K562 (cell line): ENCODE measurements at regions of chr2 and their contacts with region 1.

Region 1: DNA sequence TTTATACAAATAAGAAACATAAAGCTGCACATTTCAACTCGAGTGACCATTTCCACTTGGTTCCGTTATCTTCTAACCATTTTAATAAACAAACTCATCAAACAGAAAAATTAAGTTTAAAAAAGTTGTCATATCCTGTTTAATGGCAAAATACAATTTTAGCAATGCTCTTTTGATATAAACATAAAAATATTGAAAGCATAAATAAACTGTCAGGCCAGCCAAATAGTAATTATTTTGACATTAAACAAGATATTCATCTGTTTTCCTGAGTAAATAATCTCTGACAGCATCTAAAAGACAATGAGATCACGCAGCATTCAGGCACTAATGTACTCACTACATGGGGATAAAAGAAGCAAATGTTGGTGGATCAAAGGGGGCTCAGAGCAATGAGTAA is 145.3 kb upstream of the ATP5MC3 start:
- DNase-seq: no peak
- ATAC-seq: no peak
- H3K4me3 ChIP-seq: no peak overlapping the region
- H3K27ac ChIP-seq: no peak overlapping the region
- H3K4me1 ChIP-seq: no peaks in the 10 kb centered on the region
- H3K27me3 ChIP-seq: no peaks in the 10 kb centered on the region
- CTCF ChIP-seq: no peak
- EP300 ChIP-seq: no peak
- POLR2A ChIP-seq: no peak
- RAD21 ChIP-seq: no peak

Region 2: DNA sequence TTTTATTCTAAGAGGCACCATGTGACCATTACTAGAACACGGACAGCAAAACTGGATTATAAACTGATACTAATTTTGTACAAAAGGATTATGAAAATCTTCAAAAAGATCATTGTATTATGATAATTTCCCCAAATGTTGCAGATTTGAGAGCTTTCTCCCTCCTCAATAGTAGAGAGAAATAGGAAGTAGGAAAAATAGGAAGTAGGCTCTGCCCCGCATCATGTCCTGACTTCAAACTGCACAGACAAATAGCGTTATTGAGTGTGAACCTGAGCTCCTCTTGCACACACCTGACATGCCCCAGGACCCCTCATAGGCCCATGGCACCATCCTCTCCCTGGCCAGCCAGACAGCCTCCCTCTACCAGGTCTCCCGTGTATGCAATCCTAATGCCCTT is 588.0 kb before region 1 on chr2:
- CTCF ChIA-PET with region 1: no interaction called
- POLR2A ChIA-PET with region 1: no interaction called
- in situ Hi-C with region 1: no loop called
- intact Hi-C with region 1: no loop called
- DNase-seq: no peak
- ATAC-seq: no peak
- H3K4me3 ChIP-seq: no peak overlapping the region
- H3K27ac ChIP-seq: no peak overlapping the region
- H3K4me1 ChIP-seq: no peaks in the 10 kb centered on the region
- H3K27me3 ChIP-seq: peaks cover 13 to 20% of the 10 kb centered on the region in 2 experiments; a peak in 4 of 5 replicates
- CTCF ChIP-seq: no peak
- EP300 ChIP-seq: no peak
- POLR2A ChIP-seq: no peak
- RAD21 ChIP-seq: no peak

Region 3: GRCh38 chr2:175030380-175031271 is 296.2 kb before region 1 on chr2:
- CTCF ChIA-PET with region 1: no interaction called
- POLR2A ChIA-PET with region 1: no interaction called
- in situ Hi-C with region 1: no loop called
- intact Hi-C with region 1: loop called (anchors 1 kb)
- DNase-seq: peak in 2 of 4 experiments; percentile 36 to 55
- ATAC-seq: peak; percentile 98
- H3K4me3 ChIP-seq: no peak overlapping the region
- H3K27ac ChIP-seq: no peak overlapping the region
- H3K4me1 ChIP-seq: no peaks in the 10 kb centered on the region
- H3K27me3 ChIP-seq: peaks cover 0 to 6% of the 10 kb centered on the region in 2 experiments; a peak in 3 of 5 replicates
- CTCF ChIP-seq: peak; percentile 60 to 73 (median 68)
- EP300 ChIP-seq: no peak
- POLR2A ChIP-seq: no peak
- RAD21 ChIP-seq: peak; percentile 55 to 82

Region 4: DNA sequence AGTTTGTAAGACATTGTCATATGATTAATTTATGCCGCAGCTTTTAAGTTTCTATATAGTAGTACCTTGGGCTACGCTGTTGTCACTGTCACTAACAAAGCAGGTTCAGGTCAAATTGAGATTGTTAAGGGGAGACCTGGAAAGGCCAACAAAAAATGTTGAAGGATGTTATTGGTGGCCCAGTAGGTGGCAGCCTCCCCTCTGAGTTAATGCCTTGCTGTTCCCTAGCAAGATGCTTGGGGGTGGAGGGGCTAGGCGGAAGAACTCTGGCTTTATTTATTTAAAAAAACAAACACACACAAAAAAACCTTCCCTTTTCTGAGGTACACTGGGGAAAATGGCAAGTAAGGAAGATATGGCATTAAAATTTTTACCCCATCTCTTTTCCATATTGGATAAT is 17.0 kb before region 1 on chr2:
- CTCF ChIA-PET with region 1: no interaction called
- POLR2A ChIA-PET with region 1: no interaction called
- in situ Hi-C with region 1: no loop called
- intact Hi-C with region 1: loop called (anchors 2 kb)
- DNase-seq: peak; percentile 35 to 68 (median 43)
- ATAC-seq: peak; percentile 93
- H3K4me3 ChIP-seq: no peak overlapping the region
- H3K27ac ChIP-seq: no peak overlapping the region
- H3K4me1 ChIP-seq: no peaks in the 10 kb centered on the region; a peak in 1 of 5 replicates
- H3K27me3 ChIP-seq: peaks cover 0 to 3% of the 10 kb centered on the region in 2 experiments; a peak in 2 of 5 replicates
- CTCF ChIP-seq: peak; percentile 64 to 68 (median 65)
- EP300 ChIP-seq: no peak
- POLR2A ChIP-seq: no peak
- RAD21 ChIP-seq: peak; percentile 38 to 66; a peak in 3 of 4 replicates